ENCODE measurements at regions of chr20 and their contacts with region 1.

Region 1: DNA sequence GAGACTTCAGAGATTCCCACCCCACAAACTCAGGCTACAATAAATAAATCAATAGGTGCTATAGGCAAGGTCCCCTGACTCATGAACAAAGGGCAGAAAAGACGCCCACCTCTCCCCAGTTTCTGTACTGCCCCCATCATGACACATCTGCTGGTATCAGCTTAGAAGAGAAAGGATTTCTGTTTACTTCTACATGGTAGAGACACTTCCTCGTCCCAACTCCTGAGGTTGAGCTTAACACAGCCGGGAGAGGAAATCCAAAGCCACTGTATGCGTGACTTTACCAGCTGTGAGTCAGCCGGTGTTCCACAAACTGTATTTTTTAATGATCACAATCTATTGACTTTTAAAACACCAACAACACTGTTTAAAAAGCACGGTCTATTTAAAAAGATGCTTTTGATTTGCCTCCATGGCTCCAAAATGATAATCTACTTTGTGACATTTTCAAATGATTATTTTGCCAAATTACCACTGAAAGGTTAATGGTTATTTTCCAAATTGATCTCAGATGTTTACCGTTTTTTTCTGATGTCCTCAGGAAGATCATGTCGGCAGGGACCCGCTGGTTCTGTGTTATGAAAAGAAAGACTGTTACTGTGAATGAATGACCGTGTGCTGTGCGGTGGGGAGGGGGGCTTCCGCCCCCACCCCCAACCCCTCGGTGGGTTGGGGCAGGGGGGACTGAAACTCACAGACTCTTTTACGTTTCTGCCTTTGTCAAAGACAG is 72.5 kb downstream of the ATP9A start:
- DNase-seq: peak; percentile 40
- H3K4me3 ChIP-seq: no peak overlapping the region; the same call in none of the 2 replicates
- CTCF ChIP-seq: no peak

Region 2: GRCh38 chr20:51712501-51713197 is 16.9 kb after region 1 on chr20:
- CTCF ChIA-PET with region 1: interaction called, 42 read pairs
- POLR2A ChIA-PET with region 1: no interaction called
- DNase-seq: no peak
- H3K4me3 ChIP-seq: no peak overlapping the region
- CTCF ChIP-seq: peak; percentile 48

Region 3: DNA sequence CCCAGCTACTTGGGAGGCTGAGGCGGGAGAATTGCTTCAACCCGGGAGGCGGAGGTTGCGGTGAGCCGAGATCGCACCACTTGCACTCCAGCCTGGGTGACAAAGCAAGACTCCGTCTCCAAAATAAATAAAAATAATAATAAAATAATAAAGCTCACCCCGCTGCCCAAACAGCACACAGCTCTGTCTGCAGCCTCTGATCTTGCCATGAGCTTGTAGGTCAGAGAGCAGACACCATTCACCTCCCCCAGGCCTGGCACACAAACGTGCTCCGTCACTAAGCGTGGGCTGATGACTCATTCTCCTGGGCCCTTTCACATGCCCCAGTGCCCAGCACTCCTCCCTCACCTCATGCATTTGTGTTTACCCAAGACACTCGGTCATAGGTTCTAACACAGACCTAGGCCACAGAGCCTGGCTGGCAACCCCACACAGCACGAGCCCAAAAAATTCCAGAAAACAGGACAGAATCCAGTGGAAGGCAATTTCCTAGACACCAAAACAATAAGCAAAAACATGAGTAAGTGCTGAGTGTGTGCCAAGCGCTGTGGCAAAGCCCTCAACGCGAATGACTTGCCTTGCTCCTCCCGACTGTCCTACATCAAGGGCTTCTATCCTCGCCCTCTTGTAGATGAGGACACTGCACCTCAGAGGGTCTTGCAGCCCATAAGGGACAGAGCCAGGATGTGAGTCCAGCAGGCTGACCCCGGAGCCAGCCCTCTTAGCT is 54.5 kb after region 1 on chr20:
- CTCF ChIA-PET with region 1: interaction called, 11 read pairs
- POLR2A ChIA-PET with region 1: no interaction called
- DNase-seq: peak; percentile 56
- H3K4me3 ChIP-seq: no peak overlapping the region
- CTCF ChIP-seq: no peak

Region 4: DNA sequence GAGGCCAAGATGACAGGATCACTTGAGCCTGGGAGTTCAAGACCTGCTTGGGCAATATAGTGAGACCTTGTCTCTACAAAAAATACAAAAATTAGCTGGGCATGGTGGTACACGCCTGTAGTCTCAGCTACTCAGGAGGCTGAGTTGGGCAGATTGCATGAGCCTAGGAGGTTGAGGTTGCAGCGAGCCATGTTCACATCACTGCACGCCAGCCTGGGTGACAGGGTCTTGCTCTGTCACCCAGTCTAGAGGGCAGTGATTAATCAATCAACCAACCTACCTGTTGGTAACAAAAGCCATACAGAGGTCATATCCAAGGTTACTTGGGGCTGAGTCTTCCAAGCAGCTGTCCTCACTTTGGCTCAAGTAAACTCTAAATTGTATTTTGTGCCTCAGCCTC is 80.5 kb after region 1 on chr20:
- CTCF ChIA-PET with region 1: no interaction called
- POLR2A ChIA-PET with region 1: no interaction called
- DNase-seq: no peak
- H3K4me3 ChIP-seq: no peak overlapping the region
- CTCF ChIP-seq: no peak

Region 5: GRCh38 chr20:52083627-52084232 is 388.0 kb after region 1 on chr20:
- CTCF ChIA-PET with region 1: interaction called, 62 read pairs
- POLR2A ChIA-PET with region 1: no interaction called
- DNase-seq: no peak
- H3K4me3 ChIP-seq: no peak overlapping the region
- CTCF ChIP-seq: peak; percentile 51

Measured in AG04449 (cell line).